ENCODE measurements at regions of chr17 and their contacts with region 1.

Region 1: DNA sequence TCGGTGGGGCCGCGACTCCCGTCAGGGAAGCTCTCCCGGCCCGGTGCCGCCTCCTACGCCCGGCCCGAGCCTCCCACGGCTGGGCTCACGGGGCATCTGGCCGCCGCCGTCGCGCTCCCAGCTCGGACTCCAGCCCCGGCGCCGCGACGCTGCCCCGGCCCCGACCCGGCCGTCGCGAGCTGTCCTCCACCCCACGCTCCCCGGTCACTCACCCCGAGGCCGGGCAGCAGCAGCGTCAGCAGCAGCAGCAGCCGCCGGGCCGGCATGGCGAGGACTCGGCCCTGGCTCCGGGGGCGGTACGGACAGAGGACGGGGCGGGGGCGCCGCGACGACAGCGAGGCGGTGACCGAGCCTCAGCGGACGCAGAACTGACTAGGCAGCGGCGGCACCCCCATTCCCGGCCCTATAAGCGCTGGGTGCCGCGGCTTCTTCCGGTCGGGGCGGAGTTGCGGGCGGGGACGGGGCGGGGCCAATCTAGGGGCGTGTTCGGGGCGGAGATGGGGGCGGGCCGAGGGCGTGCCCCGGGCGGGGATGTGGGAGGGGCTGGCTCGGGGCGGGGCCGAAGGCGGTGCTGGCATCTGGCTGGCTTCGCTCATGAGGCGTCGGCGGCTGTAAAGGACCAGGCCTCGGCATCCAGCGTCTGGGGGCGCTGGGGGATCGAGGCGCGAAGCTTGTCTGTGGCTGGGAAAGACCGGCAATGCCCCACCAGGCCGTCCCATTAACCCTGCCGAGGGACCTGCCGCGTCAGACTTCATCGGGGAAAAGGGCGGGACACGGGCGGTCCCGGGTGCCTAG is at the start of gene ERN1:
- DNase-seq: peak; percentile 92
- ATAC-seq: peak; percentile 87
- H3K4me3 ChIP-seq: peak within 1 kb of the TSS; percentile 32 to 80 (median 66)
- H3K4me3 Mint-ChIP-seq: peak within 1 kb of the TSS; percentile 89
- H3K27ac ChIP-seq: peak within 1 kb of the TSS; percentile 72 to 76
- H3K27ac Mint-ChIP-seq: peak within 1 kb of the TSS; percentile 89
- H3K4me1 ChIP-seq: peaks cover 13 to 23% of the 10 kb centered on the region in 2 donors
- H3K4me1 Mint-ChIP-seq: peaks cover 21% of the 10 kb centered on the region
- H3K27me3 ChIP-seq: no peaks in the 10 kb centered on the region
- H3K27me3 Mint-ChIP-seq: no peaks in the 10 kb centered on the region
- CTCF ChIP-seq: no peak
- total RNA-seq, gene ERN1: 19.4 and 24.7 TPM in 2 replicates

Region 2: DNA sequence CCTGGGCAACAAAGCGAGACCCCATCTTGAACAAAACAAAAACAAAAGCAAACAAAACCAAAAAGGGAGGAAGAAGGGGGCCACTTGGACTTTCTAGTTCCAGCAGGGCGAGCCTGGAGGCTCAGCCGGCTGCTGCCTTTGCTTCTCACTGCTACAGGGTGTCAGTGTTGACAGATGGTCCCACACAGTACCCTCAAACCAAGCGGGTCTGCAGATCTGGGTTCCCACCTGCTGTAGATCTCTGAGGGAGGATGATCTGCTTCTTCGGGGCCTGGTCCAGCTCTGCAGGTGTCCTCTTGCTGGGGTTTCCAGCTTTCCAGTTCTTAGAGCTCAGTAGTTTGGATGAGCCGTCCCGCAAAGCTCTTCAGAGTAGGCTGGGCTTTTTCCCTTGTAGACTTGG is 225.6 kb before region 1 on chr17:
- CTCF ChIA-PET with region 1: interaction called, 122 read pairs
- POLR2A ChIA-PET with region 1: no interaction called
- intact Hi-C with region 1: no loop called
- DNase-seq: no peak
- ATAC-seq: no peak
- H3K4me3 ChIP-seq: no peak overlapping the region
- H3K4me3 Mint-ChIP-seq: no peak overlapping the region
- H3K27ac ChIP-seq: no peak overlapping the region
- H3K27ac Mint-ChIP-seq: no peak overlapping the region
- H3K4me1 ChIP-seq: no peaks in the 10 kb centered on the region
- H3K4me1 Mint-ChIP-seq: peaks cover 4% of the 10 kb centered on the region
- H3K27me3 ChIP-seq: no peaks in the 10 kb centered on the region
- H3K27me3 Mint-ChIP-seq: peaks cover 8% of the 10 kb centered on the region
- CTCF ChIP-seq: no peak

Region 3: DNA sequence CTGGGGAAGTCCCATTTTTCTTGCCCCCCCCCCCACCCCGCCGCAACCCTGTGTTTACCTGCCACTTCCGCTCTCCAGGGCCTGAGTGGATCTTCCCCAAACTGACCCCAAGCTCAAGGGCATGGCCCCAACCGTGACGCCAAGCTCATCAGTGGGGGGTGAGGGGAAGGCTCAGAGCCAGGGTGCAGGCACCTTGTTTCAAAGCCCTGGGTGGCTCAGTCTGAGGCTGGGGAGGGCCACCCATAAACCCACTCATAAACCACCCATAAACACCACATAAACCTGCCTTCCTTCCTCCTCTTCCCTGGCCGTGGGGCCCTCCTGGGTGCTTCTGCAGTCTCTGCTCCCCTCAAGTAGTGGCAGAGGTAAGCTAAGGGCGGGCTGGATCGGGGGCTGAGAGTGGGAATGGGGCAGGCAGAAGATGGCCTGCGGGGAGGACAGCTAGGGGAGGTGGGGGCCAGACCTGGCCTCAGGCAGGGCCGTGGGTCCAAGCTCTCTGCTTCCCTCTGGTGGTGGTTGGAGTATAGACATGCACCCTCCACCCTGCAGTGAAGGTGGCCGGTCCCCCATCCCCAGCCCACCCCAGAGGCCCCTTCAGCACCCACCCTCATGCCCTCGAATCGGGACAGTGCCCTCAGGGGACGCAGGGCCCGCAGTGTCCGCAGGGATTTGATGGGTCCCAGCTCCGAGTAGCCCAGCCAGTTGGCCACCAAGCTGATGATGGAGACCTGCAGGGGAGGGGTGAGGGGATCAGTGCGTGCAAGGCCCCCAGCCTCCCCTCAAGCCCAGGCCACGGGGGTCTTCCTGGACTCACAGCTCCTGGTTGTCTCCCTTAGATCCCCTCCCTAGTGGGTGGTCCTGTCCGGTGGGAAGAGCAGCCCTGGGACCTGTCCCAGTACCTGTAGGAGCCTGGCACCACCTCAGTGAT is 183.3 kb before region 1 on chr17:
- CTCF ChIA-PET with region 1: interaction called, 29 read pairs
- POLR2A ChIA-PET with region 1: no interaction called
- intact Hi-C with region 1: loop called (anchors 5 kb)
- DNase-seq: peak; percentile 87
- ATAC-seq: peak; percentile 70
- H3K4me3 ChIP-seq: peak overlapping the region; percentile 20 to 59 (median 41)
- H3K4me3 Mint-ChIP-seq: peak overlapping the region; percentile 89
- H3K27ac ChIP-seq: peak overlapping the region; percentile 72 to 84
- H3K27ac Mint-ChIP-seq: peak overlapping the region; percentile 99
- H3K4me1 ChIP-seq: peaks cover 35 to 70% of the 10 kb centered on the region in 2 donors
- H3K4me1 Mint-ChIP-seq: peaks cover 46% of the 10 kb centered on the region
- H3K27me3 ChIP-seq: no peaks in the 10 kb centered on the region
- H3K27me3 Mint-ChIP-seq: no peaks in the 10 kb centered on the region
- CTCF ChIP-seq: peak; percentile 92

Region 4: GRCh38 chr17:64025732-64026294 is 104.1 kb before region 1 on chr17:
- CTCF ChIA-PET with region 1: interaction called, 655 read pairs
- POLR2A ChIA-PET with region 1: interaction called, 14 read pairs
- intact Hi-C with region 1: loop called (anchors 1 kb)
- DNase-seq: peak; percentile 94
- ATAC-seq: peak; percentile 90
- H3K4me3 ChIP-seq: peak overlapping the region in 4 of 5 experiments; percentile 4 to 47 (median 22)
- H3K4me3 Mint-ChIP-seq: peak overlapping the region; percentile 80
- H3K27ac ChIP-seq: peak overlapping the region; percentile 52 to 67
- H3K27ac Mint-ChIP-seq: peak overlapping the region; percentile 57
- H3K4me1 ChIP-seq: peaks cover 26 to 30% of the 10 kb centered on the region in 2 donors
- H3K4me1 Mint-ChIP-seq: peaks cover 37% of the 10 kb centered on the region
- H3K27me3 ChIP-seq: no peaks in the 10 kb centered on the region
- H3K27me3 Mint-ChIP-seq: no peaks in the 10 kb centered on the region
- CTCF ChIP-seq: peak; percentile 94

Region 5: DNA sequence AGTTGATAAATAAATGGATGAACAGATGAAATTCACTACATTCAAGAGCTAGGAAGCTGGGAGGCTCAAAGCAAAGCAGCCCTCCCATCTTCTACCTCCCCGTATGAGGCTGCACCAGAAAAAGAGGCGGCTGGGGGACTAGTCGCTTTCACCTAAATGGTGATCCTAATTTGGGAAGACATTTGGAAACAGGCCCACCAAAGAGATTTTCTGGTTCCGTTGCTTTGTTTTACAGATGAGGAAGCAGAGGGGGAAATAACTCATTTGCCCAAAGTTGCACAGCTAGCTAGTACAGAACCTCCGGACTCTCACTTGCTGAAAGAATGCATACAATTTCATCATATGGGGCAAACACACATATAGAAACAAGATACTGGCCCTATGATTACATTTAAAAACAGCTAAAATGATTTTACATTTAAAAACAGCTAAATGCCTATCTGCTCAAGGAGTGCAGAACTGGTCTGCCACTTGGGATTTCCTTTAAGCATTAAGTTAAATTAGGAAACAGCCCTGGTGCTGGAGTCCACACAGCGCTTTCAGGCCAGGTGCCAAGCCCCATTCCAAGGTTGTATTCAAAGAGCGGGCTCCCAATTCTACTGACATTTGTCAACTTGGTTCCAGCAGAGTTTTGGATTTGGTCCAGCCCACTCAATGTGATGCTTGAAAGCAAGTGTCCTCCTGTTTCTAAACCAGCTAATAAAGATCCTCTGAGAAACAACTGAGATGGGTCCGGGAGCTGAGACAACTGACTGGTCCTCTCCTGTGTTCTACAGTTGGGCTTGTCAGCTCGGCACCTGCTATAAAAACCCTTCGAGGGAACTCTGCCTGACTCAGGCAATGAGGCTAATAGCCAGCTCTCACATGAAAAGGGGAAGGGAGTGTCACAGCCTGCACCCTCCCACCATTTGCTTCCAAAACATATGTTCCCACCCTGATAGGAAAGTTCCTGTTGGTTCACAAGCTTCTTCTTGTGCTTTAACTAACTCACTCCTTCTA is 11.7 kb before region 1 on chr17:
- CTCF ChIA-PET with region 1: interaction called, 14 read pairs
- POLR2A ChIA-PET with region 1: interaction called, 5 read pairs
- intact Hi-C with region 1: no loop called
- DNase-seq: no peak
- ATAC-seq: no peak
- H3K4me3 ChIP-seq: no peak overlapping the region
- H3K4me3 Mint-ChIP-seq: no peak overlapping the region
- H3K27ac ChIP-seq: no peak overlapping the region
- H3K27ac Mint-ChIP-seq: no peak overlapping the region
- H3K4me1 ChIP-seq: peaks cover 10 to 18% of the 10 kb centered on the region in 2 donors
- H3K4me1 Mint-ChIP-seq: peaks cover 14% of the 10 kb centered on the region
- H3K27me3 ChIP-seq: no peaks in the 10 kb centered on the region
- H3K27me3 Mint-ChIP-seq: no peaks in the 10 kb centered on the region
- CTCF ChIP-seq: no peak

Region 6: DNA sequence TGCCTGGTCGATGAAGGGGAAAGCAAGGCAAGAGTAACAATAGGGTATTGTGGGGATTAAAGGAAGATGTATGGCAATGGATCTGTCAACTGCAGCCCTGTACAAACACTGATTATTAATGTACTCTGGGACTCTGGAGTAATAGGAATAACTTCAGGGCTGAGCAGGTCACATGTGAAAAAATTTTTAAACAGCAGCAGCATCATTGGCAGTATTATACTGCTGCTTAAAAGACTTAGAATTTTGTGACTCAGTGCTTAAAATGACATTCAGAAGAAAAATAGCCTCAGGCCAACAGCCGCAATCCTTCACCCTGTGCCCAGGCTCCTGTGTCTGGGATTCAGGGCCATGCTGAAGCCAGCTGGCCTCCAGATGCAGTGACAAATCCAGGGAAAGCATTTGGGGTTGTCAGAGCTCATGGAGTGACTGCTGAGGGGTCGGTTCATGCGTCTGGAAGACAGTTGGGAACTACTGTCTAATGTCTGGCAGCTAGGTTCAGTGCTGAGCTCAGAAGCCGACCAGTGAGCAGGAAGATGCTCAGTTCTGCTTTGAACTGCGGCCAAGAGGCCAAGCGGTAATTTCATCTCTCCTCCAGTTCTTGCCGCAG is 110.9 kb after region 1 on chr17:
- CTCF ChIA-PET with region 1: no interaction called
- POLR2A ChIA-PET with region 1: no interaction called
- intact Hi-C with region 1: no loop called
- DNase-seq: no peak
- ATAC-seq: no peak
- H3K4me3 ChIP-seq: no peak overlapping the region
- H3K4me3 Mint-ChIP-seq: no peak overlapping the region
- H3K27ac ChIP-seq: no peak overlapping the region
- H3K27ac Mint-ChIP-seq: no peak overlapping the region
- H3K4me1 ChIP-seq: no peaks in the 10 kb centered on the region
- H3K4me1 Mint-ChIP-seq: peaks cover 1% of the 10 kb centered on the region
- H3K27me3 ChIP-seq: no peaks in the 10 kb centered on the region
- H3K27me3 Mint-ChIP-seq: no peaks in the 10 kb centered on the region
- CTCF ChIP-seq: no peak